GM12878 (cell line): ENCODE measurements at regions of chr1 and their contacts with region 1.

Region 1: GRCh38 chr1:229479660-229480399 is 28.3 kb downstream of the NUP133 start:
- DNase-seq: peak; percentile 58
- ATAC-seq: peak; percentile 82
- H3K4me3 ChIP-seq: no peak overlapping the region; the same call in 1 of the 2 replicates
- H3K27ac ChIP-seq: peak overlapping the region; percentile 65
- H3K4me1 ChIP-seq: peaks cover 31% of the 10 kb centered on the region
- H3K27me3 ChIP-seq: no peaks in the 10 kb centered on the region
- CTCF ChIP-seq: no peak
- EP300 ChIP-seq: no peak
- POLR2A ChIP-seq: no peak
- RAD21 ChIP-seq: no peak

Region 2: DNA sequence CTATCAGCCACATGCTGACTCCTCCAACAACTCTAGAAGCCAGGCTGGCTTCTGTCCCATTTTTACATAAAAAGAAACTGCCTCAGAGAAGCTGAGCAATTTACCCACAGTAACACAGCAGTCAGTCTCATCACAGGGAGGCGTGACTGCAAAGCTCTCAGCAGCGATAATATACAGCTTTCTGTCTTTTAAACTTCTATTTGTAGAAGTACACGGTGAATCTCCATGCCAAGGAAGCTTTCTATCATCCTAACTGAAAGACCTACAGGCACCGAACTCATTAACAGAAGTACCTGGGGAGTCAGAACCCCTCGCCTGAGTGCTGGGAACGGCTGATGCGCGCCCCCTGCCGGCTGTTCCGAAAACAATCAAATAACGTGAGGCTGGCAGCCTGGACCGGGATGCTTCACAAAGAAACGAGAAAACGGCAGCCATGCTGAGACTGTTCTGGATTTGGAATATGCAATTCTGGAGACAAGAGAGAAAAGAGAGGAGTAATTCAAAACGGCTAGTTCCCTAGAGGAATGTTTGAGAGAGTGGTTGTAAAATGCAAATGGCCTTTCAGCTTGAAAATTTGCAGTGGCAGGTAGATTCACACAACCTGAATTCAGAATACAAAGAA is 252.4 kb before region 1 on chr1:
- CTCF ChIA-PET with region 1: interaction called, 11 read pairs
- POLR2A ChIA-PET with region 1: no interaction called
- RAD21 ChIA-PET with region 1: interaction called, 4 read pairs
- SMC1A ChIA-PET with region 1: interaction called, 8 read pairs
- in situ Hi-C with region 1: no loop called
- intact Hi-C with region 1: no loop called
- DNase-seq: no peak
- ATAC-seq: peak; percentile 69
- H3K4me3 ChIP-seq: no peak overlapping the region
- H3K27ac ChIP-seq: no peak overlapping the region
- H3K4me1 ChIP-seq: peaks cover 7% of the 10 kb centered on the region; the same call in 1 of the 2 replicates
- H3K27me3 ChIP-seq: no peaks in the 10 kb centered on the region; a peak in 2 of 4 replicates
- CTCF ChIP-seq: peak; percentile 73 to 84 (median 78)
- EP300 ChIP-seq: no peak
- POLR2A ChIP-seq: no peak
- RAD21 ChIP-seq: peak; percentile 79

Region 3: GRCh38 chr1:229341774-229342655 is 137.8 kb before region 1 on chr1:
- CTCF ChIA-PET with region 1: no interaction called
- POLR2A ChIA-PET with region 1: interaction called, 4 read pairs
- RAD21 ChIA-PET with region 1: no interaction called
- SMC1A ChIA-PET with region 1: interaction called, 4 read pairs
- in situ Hi-C with region 1: no loop called
- intact Hi-C with region 1: loop called (anchors 2 kb)
- DNase-seq: no peak
- ATAC-seq: peak; percentile 86
- H3K4me3 ChIP-seq: peak overlapping the region; percentile 65
- H3K27ac ChIP-seq: no peak overlapping the region; the same call in 1 of the 2 replicates
- H3K4me1 ChIP-seq: peaks cover 6% of the 10 kb centered on the region
- H3K27me3 ChIP-seq: no peaks in the 10 kb centered on the region; a peak in 2 of 4 replicates
- CTCF ChIP-seq: no peak
- EP300 ChIP-seq: no peak
- POLR2A ChIP-seq: peak; percentile 73; the same call in 1 of the 2 replicates
- RAD21 ChIP-seq: no peak

Region 4: GRCh38 chr1:229428256-229428655 is 51.6 kb before region 1 on chr1:
- CTCF ChIA-PET with region 1: no interaction called
- POLR2A ChIA-PET with region 1: no interaction called
- RAD21 ChIA-PET with region 1: no interaction called
- SMC1A ChIA-PET with region 1: no interaction called
- in situ Hi-C with region 1: no loop called
- intact Hi-C with region 1: no loop called
- DNase-seq: no peak
- ATAC-seq: no peak
- H3K4me3 ChIP-seq: no peak overlapping the region
- H3K27ac ChIP-seq: no peak overlapping the region
- H3K4me1 ChIP-seq: no peaks in the 10 kb centered on the region
- H3K27me3 ChIP-seq: peaks cover 3 to 14% of the 10 kb centered on the region in 2 experiments
- CTCF ChIP-seq: no peak
- EP300 ChIP-seq: no peak
- POLR2A ChIP-seq: no peak
- RAD21 ChIP-seq: no peak

Region 5: GRCh38 chr1:229440851-229441537 is 38.8 kb before region 1 on chr1:
- CTCF ChIA-PET with region 1: interaction called, 33 read pairs
- POLR2A ChIA-PET with region 1: interaction called, 7 read pairs
- RAD21 ChIA-PET with region 1: interaction called, 16 read pairs
- SMC1A ChIA-PET with region 1: interaction called, 38 read pairs
- in situ Hi-C with region 1: no loop called
- intact Hi-C with region 1: loop called (anchors 2 kb)
- DNase-seq: peak; percentile 88
- ATAC-seq: peak; percentile 98
- H3K4me3 ChIP-seq: no peak overlapping the region
- H3K27ac ChIP-seq: 0 out of 2 replicates have a peak overlapping the region, but pooled peaks have one; percentile 0
- H3K4me1 ChIP-seq: peaks cover 17% of the 10 kb centered on the region
- H3K27me3 ChIP-seq: no peaks in the 10 kb centered on the region
- CTCF ChIP-seq: no peak
- EP300 ChIP-seq: peak; percentile 93 to 95
- POLR2A ChIP-seq: no peak
- RAD21 ChIP-seq: no peak

Region 6: GRCh38 chr1:229466887-229467286 is 12.9 kb before region 1 on chr1:
- CTCF ChIA-PET with region 1: interaction called, 19 read pairs
- POLR2A ChIA-PET with region 1: no interaction called
- RAD21 ChIA-PET with region 1: interaction called, 4 read pairs
- SMC1A ChIA-PET with region 1: interaction called, 13 read pairs
- in situ Hi-C with region 1: no loop called
- intact Hi-C with region 1: no loop called
- DNase-seq: no peak
- ATAC-seq: no peak
- H3K4me3 ChIP-seq: no peak overlapping the region
- H3K27ac ChIP-seq: no peak overlapping the region
- H3K4me1 ChIP-seq: no peaks in the 10 kb centered on the region
- H3K27me3 ChIP-seq: no peaks in the 10 kb centered on the region
- CTCF ChIP-seq: no peak
- EP300 ChIP-seq: no peak
- POLR2A ChIP-seq: no peak
- RAD21 ChIP-seq: no peak

Region 7: DNA sequence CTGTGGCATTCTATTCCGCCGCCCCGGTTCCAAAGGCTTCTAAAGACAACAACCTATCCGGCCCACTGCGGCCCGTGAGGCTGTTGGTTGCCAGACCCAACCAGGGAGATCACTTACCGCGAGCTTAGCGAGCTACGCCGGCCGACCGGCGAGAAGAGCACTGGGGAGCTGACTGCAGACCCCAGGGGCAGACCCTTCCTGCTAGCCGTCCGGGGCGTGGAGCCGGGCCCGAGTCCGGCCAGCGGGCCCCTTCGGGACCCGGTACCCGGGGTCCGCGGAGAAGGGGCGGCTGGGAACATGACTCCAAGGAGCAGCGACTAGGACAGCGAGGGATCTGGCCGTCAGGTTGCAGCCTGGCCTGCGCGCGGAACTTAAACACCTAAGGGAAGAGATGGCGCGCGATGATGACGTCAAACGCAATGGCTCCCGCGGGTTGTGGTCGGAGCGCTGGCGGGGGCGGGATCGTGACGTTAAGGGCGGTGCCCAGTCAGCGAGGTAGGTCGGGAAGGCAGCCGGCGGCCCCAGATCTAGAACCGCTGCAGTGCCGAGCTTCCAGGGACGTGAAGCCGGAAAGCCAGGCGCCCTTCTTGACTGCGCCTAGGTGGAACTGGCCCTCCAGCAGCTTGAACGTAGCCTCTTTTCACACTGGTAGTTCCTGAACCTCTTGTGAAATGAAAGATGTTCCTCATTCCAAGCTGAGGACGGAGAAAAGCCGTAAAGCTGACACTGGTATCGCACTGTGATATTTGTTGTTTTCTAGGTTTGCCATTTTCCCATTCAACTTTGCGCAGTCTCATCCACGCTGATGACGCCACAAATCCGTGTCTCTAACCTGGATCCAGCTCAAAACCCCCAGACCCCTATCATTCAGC is 28.4 kb after region 1 on chr1 and contains the start of gene NUP133:
- CTCF ChIA-PET with region 1: interaction called, 14 read pairs
- POLR2A ChIA-PET with region 1: interaction called, 4 read pairs
- RAD21 ChIA-PET with region 1: interaction called, 5 read pairs
- SMC1A ChIA-PET with region 1: interaction called, 7 read pairs
- in situ Hi-C with region 1: no loop called
- intact Hi-C with region 1: no loop called
- DNase-seq: peak; percentile 86
- ATAC-seq: peak; percentile 97
- H3K4me3 ChIP-seq: peak within 1 kb of the TSS; percentile 93
- H3K27ac ChIP-seq: peak within 1 kb of the TSS; percentile 83
- H3K4me1 ChIP-seq: peaks cover 9% of the 10 kb centered on the region
- H3K27me3 ChIP-seq: no peaks in the 10 kb centered on the region
- CTCF ChIP-seq: no peak
- EP300 ChIP-seq: 0 out of 4 replicates have a peak, but pooled peaks of 1 of the 2 experiments have one; percentile 16
- POLR2A ChIP-seq: peak; percentile 96
- RAD21 ChIP-seq: no peak
- polyA plus RNA-seq, gene NUP133: 10.9 to 24.3 TPM